Right ventricle myocardium inferior (tissue), 1 donor: ENCODE measurements at regions of chr6 and their contacts with region 1.

Region 1: GRCh38 chr6:125790358-125791150 is at the start of gene NCOA7:
- DNase-seq: peak; percentile 91
- ATAC-seq: peak; percentile 94
- total RNA-seq, gene NCOA7: 12.5 TPM

Region 2: GRCh38 chr6:125779924-125780539 is 10.5 kb before region 1 on chr6:
- intact Hi-C with region 1: loop called (anchors 1 kb)
- DNase-seq: peak; percentile 88
- ATAC-seq: peak; percentile 96

Region 3: GRCh38 chr6:125844989-125845388 is 54.4 kb after region 1 on chr6:
- intact Hi-C with region 1: loop called (anchors 5 kb)
- DNase-seq: no peak
- ATAC-seq: peak; percentile 87

Region 4: DNA sequence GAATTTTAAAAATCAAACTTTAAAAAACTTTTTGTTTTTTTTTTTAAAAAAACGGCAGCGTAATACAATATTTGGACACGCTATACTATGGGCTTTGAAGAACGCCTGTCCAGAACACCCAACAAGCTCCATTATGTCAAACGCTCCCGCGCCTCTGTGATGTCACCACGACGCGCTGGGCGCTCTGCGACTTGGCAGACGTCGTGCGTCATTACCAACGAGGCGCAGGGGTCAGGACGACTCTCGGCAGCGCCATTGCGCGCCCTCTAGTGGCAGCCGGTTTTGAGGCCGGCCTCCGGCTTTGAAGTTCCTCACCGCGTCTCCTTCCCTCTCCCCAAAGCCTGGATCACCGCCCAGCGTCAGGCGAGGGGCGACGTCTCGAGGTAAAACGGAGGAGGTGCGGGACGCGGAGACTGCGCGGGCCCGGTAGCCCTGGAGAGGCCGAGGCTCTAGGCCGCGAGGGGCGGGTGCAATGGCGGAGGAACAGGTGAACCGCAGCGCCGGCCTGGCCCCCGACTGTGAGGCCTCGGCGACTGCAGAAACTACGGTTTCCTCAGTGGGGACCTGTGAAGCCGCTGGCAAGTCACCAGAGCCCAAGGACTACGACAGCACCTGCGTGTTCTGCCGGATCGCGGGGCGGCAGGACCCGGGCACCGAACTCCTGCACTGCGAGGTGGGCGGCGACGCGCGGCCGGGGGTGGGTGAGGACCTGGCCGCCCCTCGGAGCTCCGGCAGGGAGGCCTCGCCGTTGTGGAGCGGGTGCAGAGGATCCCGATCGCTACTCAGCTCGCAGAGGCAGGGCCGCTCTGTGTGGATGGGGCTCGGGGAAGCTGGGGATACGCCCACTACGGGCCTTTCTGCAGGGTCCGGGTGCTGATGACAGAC is 166.2 kb after region 1 on chr6 and contains the start of gene HINT3:
- intact Hi-C with region 1: loop called (anchors 2 kb)
- DNase-seq: peak; percentile 99
- ATAC-seq: peak; percentile 97
- total RNA-seq, gene HINT3: 34.8 TPM